ENCODE measurements at regions of chr5 and their contacts with region 1.

Region 1: DNA sequence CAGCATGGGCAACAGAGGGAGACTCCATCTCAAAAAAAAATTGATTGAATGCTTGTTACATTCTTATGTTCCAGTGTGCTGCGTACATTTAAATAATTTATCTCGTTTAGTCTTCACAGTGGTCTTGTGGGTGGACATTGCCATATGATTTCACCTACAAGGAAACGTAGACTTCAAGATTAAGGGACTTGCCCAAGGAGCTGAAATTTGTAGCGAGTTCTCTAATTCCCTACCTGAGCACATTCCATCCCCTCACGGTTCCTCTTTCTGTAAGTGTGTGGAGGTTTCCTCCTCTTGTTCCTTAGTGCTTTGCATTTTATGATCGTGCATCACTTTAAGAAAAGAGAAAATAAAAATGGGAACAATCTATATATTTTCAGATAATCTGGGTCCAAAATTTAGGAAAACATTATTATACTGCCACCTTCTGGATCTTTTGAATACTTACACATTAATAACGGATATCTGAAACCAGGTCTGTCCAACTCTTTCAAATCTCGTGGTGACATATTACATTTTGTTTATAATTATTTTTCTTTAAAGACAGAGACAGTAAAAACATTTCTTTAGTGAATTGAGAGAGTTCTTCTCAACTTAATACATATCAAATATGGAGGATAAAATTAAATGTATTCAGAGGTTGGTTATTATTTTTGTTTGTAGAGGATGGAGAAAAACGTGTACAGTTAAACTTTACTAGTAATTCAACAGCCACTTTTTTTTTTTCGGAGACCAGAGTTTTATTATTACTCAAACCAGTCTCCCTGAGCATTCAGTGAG is 29.9 kb upstream of the C7 start:
- DNase-seq: peak in 4 of 5 donors; percentile 29 to 37 (median 34)
- H3K4me3 ChIP-seq: no peak overlapping the region
- H3K4me3 Mint-ChIP-seq: peak overlapping the region in 2 of 8 donors; percentile 31 to 43
- H3K27ac ChIP-seq: no peak overlapping the region
- H3K27ac Mint-ChIP-seq: no peak overlapping the region
- H3K4me1 ChIP-seq: no peaks in the 10 kb centered on the region
- H3K4me1 Mint-ChIP-seq: peaks cover 0 to 2% (median 1%) of the 10 kb centered on the region in 4 donors
- H3K27me3 ChIP-seq: no peaks in the 10 kb centered on the region
- H3K27me3 Mint-ChIP-seq: peaks cover under 1 to 3% of the 10 kb centered on the region in 2 donors

Region 2: DNA sequence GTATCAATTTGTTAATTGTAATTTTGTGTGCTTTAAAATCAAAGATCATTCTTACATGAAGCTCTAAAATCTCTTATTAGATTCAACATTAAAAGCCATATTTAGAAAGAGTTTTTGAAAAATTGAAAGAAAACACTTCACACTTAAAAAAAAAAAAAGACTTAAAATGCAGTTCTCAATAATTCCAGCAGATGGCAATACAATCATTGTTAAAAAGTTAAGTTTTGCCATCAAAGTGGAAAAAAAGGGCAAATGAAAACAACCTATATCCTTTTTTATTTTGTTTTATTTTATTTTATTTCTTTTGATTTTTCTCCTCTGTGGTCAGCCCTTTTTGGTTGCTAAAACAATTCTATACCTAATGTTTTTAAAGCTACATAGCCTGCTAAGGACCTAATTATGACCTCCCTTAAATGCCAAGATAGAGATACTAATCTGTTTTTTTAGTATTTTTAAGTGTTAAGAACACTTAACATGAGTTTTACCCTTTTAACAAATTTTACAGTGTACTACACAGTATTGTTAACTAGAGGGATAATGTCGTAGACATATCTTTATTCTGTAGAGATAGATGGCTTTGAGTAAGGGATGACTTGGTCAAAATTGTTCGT is 1300.4 kb before region 1 on chr5:
- CTCF ChIA-PET with region 1: interaction called, 6 read pairs
- POLR2A ChIA-PET with region 1: no interaction called
- intact Hi-C with region 1: loop called (anchors 1 kb)
- DNase-seq: peak in 4 of 5 donors; percentile 15 to 26 (median 19)
- H3K4me3 ChIP-seq: no peak overlapping the region
- H3K4me3 Mint-ChIP-seq: peak overlapping the region in 1 of 8 donors; percentile 32
- H3K27ac ChIP-seq: no peak overlapping the region
- H3K27ac Mint-ChIP-seq: no peak overlapping the region
- H3K4me1 ChIP-seq: peaks cover 10% of the 10 kb centered on the region
- H3K4me1 Mint-ChIP-seq: peaks cover 4 to 11% (median 6%) of the 10 kb centered on the region in 4 donors
- H3K27me3 ChIP-seq: no peaks in the 10 kb centered on the region
- H3K27me3 Mint-ChIP-seq: peaks cover 0 to 2% of the 10 kb centered on the region in 2 donors

Region 3: DNA sequence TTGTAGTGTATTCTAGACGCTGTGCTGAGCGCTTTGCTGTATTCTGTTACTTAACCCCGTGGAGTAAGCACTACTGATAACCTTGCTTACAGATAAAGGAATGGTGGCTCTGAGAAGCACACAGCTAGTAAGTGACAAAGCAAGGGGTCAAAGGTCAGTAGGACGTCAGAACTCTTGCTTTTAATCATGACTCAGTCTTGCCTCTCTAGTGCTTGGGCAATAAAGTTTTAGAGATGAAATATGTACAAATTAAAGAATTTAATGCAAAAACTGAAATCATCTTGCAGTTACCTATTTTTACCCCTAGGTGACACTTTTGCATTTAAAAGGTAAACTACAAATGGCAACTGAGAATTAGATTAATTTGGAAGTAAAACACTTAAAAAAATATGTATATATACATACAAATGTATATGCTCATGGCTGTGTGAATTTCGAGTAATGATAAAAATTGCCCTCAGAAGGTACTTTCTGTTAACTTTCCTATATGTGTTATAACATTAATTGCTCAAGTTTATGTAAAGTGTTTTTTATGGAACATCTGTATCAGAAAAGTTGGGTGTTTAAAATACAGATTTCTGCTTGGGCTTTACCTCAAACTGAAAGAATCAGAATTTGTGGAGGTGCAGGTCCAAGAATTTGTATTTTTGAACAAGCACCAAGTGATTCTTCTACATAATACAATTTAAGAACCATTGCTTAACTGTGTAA is 1279.5 kb before region 1 on chr5:
- CTCF ChIA-PET with region 1: no interaction called
- POLR2A ChIA-PET with region 1: no interaction called
- intact Hi-C with region 1: loop called (anchors 1 kb)
- DNase-seq: peak in 1 of 5 donors; percentile 5
- H3K4me3 ChIP-seq: no peak overlapping the region
- H3K4me3 Mint-ChIP-seq: no peak overlapping the region
- H3K27ac ChIP-seq: no peak overlapping the region
- H3K27ac Mint-ChIP-seq: no peak overlapping the region
- H3K4me1 ChIP-seq: no peaks in the 10 kb centered on the region
- H3K4me1 Mint-ChIP-seq: no peaks in the 10 kb centered on the region
- H3K27me3 ChIP-seq: no peaks in the 10 kb centered on the region
- H3K27me3 Mint-ChIP-seq: peaks cover 7 to 11% of the 10 kb centered on the region in 2 donors

Region 4: GRCh38 chr5:39948867-39949468 is 930.4 kb before region 1 on chr5:
- CTCF ChIA-PET with region 1: no interaction called
- POLR2A ChIA-PET with region 1: no interaction called
- intact Hi-C with region 1: loop called (anchors 1 kb)
- DNase-seq: peak; percentile 64 to 69 (median 66)
- H3K4me3 ChIP-seq: no peak overlapping the region
- H3K4me3 Mint-ChIP-seq: no peak overlapping the region
- H3K27ac ChIP-seq: no peak overlapping the region
- H3K27ac Mint-ChIP-seq: no peak overlapping the region
- H3K4me1 ChIP-seq: no peaks in the 10 kb centered on the region
- H3K4me1 Mint-ChIP-seq: peaks cover 0 to 5% (median 2%) of the 10 kb centered on the region in 4 donors
- H3K27me3 ChIP-seq: no peaks in the 10 kb centered on the region
- H3K27me3 Mint-ChIP-seq: no peaks in the 10 kb centered on the region

Region 5: DNA sequence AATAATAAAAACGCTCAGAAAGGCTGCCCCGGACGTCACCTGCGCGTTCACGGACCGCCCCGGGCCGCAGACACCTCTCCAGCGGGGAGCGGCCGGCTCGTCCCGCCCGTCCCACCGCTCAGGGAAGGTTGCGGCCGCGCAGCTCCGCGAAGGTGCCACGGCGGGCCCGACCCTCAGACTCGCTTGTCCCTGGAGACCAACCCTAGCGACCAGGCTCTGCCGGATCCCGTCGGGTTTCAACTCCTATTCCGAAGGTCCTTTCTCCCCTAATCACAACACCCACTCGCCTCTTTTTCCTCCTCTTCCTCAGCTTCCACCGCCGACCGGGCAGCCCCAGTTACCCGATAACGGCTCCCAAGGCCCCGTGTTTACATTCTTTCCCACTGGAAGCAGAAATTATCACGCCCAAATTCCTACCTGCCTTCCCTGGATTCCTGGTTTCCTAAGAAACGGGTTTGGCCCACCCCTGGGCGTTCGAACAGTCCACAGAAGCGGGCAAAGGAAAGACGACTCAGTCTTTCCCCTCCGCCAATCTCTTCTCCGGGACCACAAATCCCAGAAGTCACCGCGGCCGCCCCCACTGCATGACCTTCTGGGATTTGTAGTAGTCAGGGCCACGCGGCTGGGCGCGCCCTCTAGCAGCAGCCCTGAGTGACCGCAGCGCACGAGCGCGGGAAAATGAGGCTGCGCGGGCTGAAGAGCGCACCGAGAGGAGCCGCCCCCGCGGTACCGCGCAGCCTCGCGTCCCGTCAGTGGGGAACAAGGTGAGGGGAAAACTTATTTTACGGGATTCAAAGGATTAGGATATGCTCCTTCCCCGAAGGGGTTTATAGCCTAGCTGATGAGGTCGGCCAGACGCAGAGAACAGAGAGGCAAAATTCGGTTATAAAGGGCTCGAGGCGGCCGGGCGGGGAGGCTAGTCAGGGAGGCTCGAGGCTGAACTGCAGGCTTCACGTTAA is 123.7 kb before region 1 on chr5 and contains the start of gene TTC33:
- CTCF ChIA-PET with region 1: no interaction called
- POLR2A ChIA-PET with region 1: no interaction called
- intact Hi-C with region 1: loop called (anchors 1 kb)
- DNase-seq: peak; percentile 90 to 97 (median 92)
- H3K4me3 ChIP-seq: peak within 1 kb of the TSS; percentile 93 to 95
- H3K4me3 Mint-ChIP-seq: no peak within 1 kb of the TSS
- H3K27ac ChIP-seq: peak within 1 kb of the TSS; percentile 90
- H3K27ac Mint-ChIP-seq: peak within 1 kb of the TSS in 1 of 7 donors; percentile 68
- H3K4me1 ChIP-seq: peaks cover 21% of the 10 kb centered on the region
- H3K4me1 Mint-ChIP-seq: peaks cover 8 to 29% (median 16%) of the 10 kb centered on the region in 4 donors
- H3K27me3 ChIP-seq: no peaks in the 10 kb centered on the region
- H3K27me3 Mint-ChIP-seq: no peaks in the 10 kb centered on the region
- total RNA-seq, gene TTC33: 15.2 to 16.2 TPM

Region 6: DNA sequence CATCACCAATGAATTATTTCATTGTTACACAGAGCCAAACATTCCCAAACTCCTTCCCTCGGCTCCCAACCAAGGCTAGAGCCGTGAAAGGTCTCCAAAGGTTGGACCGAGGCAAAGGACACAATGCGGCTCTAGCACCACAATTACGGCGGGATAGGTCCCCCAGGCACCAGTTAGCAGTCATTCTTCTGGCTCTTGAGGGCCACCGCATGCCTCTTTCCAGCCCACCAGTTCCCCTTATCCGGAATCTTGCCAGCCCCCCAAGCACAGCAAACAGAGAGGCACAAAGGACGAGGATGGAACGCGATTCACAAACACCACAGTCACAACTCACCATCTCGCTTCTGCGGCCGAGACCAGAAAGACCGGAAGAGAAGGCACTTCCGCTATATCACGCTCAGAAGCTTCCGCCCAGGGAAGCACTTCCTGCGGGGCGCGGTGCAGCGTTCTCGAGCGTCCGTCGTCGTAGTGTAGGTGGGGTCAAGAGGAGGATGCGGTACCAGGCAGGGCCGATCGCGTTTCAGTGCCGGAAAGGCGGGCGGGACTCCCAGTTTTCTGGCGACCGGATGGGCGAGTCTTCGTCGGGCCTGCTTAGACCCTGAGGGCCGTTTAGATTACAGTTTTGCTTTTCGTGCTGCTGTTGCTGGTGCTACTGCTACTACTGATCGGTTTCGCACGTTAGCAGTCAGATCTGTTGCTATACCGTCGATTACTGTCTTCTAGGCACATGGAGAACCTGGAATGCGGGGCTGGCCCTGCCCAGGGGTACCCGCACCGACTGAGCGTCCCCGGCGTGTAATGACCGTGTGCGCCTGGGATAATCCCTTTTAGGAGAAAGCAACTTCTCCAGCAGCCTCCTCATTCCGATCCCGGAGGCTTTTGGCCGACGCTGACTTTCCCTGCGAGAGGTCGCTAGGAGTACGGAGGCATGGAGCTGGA is 44.2 kb before region 1 on chr5 and contains the start of gene RPL37:
- CTCF ChIA-PET with region 1: interaction called, 3 read pairs
- POLR2A ChIA-PET with region 1: no interaction called
- intact Hi-C with region 1: loop called (anchors 5 kb)
- DNase-seq: peak; percentile 88 to 91 (median 90)
- H3K4me3 ChIP-seq: peak within 1 kb of the TSS; percentile 71 to 99
- H3K4me3 Mint-ChIP-seq: peak within 1 kb of the TSS; percentile 97 to 100 (median 98)
- H3K27ac ChIP-seq: peak within 1 kb of the TSS; percentile 92
- H3K27ac Mint-ChIP-seq: peak within 1 kb of the TSS; percentile 94 to 100 (median 99)
- H3K4me1 ChIP-seq: peaks cover 41% of the 10 kb centered on the region
- H3K4me1 Mint-ChIP-seq: peaks cover 20 to 68% (median 47%) of the 10 kb centered on the region in 4 donors
- H3K27me3 ChIP-seq: no peaks in the 10 kb centered on the region
- H3K27me3 Mint-ChIP-seq: no peaks in the 10 kb centered on the region
- total RNA-seq, gene RPL37: 2,354 to 2,406 TPM

Region 7: DNA sequence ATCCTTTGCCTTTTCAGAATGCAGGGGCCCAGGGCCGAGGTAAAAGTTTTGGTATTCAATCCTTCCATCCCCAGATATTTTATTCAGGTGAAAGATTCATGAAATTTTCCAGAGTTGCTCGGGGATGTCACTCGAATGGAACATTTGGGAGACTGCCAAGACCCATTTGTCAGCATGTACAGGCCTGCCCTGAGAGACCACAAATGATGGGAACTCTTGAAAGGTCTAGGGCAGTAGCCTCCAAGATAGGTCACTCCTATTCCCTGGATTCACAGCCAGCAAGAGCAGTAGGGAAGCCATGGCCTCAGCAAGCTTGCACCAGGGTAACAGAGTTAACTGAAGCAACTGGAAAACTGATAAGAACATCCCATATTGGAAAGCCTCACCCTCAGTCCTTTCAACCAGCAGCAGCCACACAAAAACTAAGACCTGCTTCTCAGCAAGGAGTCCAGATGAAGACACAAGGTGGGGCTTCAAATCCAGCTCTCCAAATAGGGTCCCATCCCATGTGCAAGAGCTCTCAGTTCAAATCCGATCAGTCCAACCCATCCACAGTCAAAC is 25.6 kb before region 1 on chr5:
- CTCF ChIA-PET with region 1: no interaction called
- POLR2A ChIA-PET with region 1: no interaction called
- intact Hi-C with region 1: no loop called
- DNase-seq: no peak
- H3K4me3 ChIP-seq: no peak overlapping the region
- H3K4me3 Mint-ChIP-seq: no peak overlapping the region
- H3K27ac ChIP-seq: no peak overlapping the region
- H3K27ac Mint-ChIP-seq: no peak overlapping the region
- H3K4me1 ChIP-seq: no peaks in the 10 kb centered on the region
- H3K4me1 Mint-ChIP-seq: peaks cover 0 to under 1% (median 0%) of the 10 kb centered on the region in 4 donors
- H3K27me3 ChIP-seq: no peaks in the 10 kb centered on the region
- H3K27me3 Mint-ChIP-seq: no peaks in the 10 kb centered on the region